Breast epithelium (tissue), 4 donors: ENCODE measurements at regions of chr5 and their contacts with region 1.

Region 1: DNA sequence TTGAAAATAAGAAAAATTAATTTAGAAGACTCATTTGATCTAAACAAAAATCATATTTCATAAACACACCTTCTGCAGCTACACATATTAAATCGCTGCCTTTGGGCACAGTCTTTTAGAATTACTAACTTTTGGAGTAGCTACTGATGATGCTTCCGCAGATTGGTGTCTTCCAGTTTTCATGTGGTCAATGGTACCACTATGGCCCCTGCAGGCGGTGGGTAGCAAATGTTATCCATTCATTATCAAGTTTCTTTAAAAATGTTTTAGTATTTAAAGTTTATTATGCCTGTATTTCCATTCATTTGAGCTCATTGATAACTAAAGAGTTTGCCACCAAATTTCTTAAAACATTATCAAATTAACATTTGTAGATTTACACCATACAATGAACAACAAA is 122.9 kb upstream of the GRAMD2B start:
- DNase-seq: no peak
- H3K4me3 ChIP-seq: no peak overlapping the region
- H3K27ac ChIP-seq: no peak overlapping the region
- H3K4me1 ChIP-seq: no peaks in the 10 kb centered on the region
- H3K27me3 ChIP-seq: no peaks in the 10 kb centered on the region
- CTCF ChIP-seq: no peak
- POLR2A ChIP-seq: no peak

Region 2: GRCh38 chr5:124614105-124614504 is 1686.2 kb before region 1 on chr5:
- intact Hi-C with region 1: no loop called
- DNase-seq: no peak
- H3K4me3 ChIP-seq: no peak overlapping the region
- H3K27ac ChIP-seq: no peak overlapping the region
- H3K4me1 ChIP-seq: no peaks in the 10 kb centered on the region
- H3K27me3 ChIP-seq: no peaks in the 10 kb centered on the region
- CTCF ChIP-seq: no peak
- POLR2A ChIP-seq: no peak

Region 3: DNA sequence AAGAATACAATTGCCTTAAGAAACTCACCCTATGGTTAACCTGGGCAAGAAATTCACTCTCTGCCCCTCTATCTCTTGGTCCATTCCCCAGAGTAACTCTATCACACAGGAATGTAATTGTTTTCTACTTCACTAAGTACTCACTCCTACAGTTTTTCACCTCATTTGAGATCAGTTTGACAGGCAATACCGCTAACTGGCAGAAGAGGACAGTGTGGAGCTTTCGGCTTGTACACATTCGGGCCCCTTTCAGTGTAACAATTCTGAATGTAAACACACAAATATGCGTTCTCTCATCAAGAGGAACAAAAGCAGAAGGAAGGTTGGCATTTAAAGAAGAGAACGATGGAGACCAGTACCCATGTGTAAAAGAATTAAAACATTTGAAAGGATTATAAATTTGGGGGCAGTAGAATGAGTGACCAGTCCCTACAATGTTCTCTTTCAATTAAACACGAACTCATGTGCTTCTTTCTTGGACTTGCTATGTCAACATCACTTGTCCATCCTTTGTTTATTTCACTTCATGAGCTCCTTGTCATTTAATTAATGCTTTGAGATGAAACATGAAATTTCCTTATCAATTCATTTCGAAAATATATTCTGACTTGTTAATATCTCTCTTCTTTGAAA is 65.6 kb before region 1 on chr5:
- intact Hi-C with region 1: no loop called
- DNase-seq: no peak
- H3K4me3 ChIP-seq: no peak overlapping the region
- H3K27ac ChIP-seq: no peak overlapping the region
- H3K4me1 ChIP-seq: no peaks in the 10 kb centered on the region
- H3K27me3 ChIP-seq: no peaks in the 10 kb centered on the region
- CTCF ChIP-seq: no peak
- POLR2A ChIP-seq: no peak

Region 4: GRCh38 chr5:126486332-126486731 is 186.0 kb after region 1 on chr5:
- intact Hi-C with region 1: loop called (anchors 5 kb)
- DNase-seq: peak in 1 of 2 donors; percentile 51
- H3K4me3 ChIP-seq: no peak overlapping the region
- H3K27ac ChIP-seq: peak overlapping the region; percentile 40 to 89
- H3K4me1 ChIP-seq: peaks cover 3 to 30% of the 10 kb centered on the region in 2 donors
- H3K27me3 ChIP-seq: no peaks in the 10 kb centered on the region
- CTCF ChIP-seq: no peak
- POLR2A ChIP-seq: no peak

Region 5: GRCh38 chr5:127206320-127207113 is 906.2 kb after region 1 on chr5:
- intact Hi-C with region 1: no loop called
- DNase-seq: no peak
- H3K4me3 ChIP-seq: no peak overlapping the region
- H3K27ac ChIP-seq: no peak overlapping the region
- H3K4me1 ChIP-seq: no peaks in the 10 kb centered on the region
- H3K27me3 ChIP-seq: no peaks in the 10 kb centered on the region
- CTCF ChIP-seq: no peak
- POLR2A ChIP-seq: no peak